RWPE1 (cell line): ENCODE measurements at regions of chr4 and their contacts with region 1.

Region 1: GRCh38 chr4:106058919-106059318 is 163.6 kb downstream of the NPNT start:
- DNase-seq: no peak
- H3K27ac ChIP-seq: no peak overlapping the region
- CTCF ChIP-seq: no peak

Region 2: DNA sequence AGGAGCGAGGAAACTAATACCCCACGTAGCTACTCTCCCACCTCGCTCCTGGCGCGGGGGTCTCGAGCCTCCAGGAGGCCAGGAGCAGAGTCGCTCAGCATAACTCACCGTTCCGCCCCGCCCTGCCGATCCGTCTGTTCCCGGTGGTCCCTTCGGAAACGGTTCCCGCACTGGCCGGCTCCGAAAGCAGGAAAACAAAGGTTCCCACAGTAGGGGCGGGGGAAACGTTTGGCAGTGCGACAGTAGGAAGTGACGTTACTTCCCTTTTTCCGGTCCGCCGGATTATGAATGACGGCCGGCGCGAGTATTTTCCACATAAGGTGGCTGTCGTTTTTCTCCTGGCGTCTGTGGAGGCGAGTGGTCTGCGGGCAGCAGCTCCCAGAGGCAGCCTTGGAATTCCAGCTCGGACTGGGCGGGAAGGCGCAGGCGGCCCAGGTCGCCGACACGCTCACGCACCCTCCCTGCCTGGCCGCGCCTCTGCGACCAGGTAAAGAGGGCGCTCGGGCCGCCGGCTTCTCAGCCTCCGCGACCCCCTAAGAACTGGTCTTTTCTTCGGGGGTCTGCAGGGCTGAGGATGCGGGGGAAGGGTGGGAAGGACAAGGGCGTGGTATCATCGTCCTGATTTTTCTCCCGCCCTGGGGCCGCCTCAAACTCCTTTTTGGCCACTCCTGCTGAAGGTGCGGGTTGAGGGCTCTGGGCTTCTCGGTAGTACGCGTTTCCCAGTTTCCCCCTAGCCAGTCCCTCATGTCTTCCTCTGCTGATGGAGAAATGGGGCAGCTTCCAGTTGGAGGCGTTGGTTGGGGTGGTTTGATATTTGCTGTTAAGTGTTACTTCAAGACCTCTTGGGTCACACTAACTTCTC is 350.2 kb before region 1 on chr4 and contains the starts of genes GSTCD and INTS12:
- CTCF ChIA-PET with region 1: no interaction called
- POLR2A ChIA-PET with region 1: interaction called, 13 read pairs
- DNase-seq: peak; percentile 88
- H3K27ac ChIP-seq: peak within 1 kb of the TSS; percentile 92
- CTCF ChIP-seq: no peak

Region 3: DNA sequence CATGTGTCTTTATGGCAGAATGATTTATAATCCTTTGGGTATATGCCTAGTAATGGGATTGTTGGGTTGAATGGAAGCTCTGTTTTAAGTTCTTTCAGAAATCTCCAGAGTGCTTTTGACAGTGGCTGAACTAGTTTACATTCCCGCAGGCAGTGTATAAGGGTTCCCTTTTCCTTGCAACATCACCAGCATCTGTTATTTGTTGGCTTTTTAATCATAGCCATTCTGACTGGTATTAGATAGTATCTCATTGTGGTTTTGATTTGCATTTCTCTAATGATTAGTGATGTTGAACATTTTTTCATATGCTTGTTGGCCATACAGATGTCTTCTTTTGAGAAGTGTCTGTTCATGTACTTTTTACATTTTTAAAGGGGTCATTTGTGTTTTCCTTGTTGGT is 127.3 kb after region 1 on chr4:
- CTCF ChIA-PET with region 1: no interaction called
- POLR2A ChIA-PET with region 1: no interaction called
- DNase-seq: no peak
- H3K27ac ChIP-seq: no peak overlapping the region
- CTCF ChIP-seq: no peak